GM10248 (cell line): ENCODE measurements at regions of chr14 and their contacts with region 1.

Region 1: GRCh38 chr14:64012720-64013119 is 159.9 kb downstream of the SYNE2 start:
- DNase-seq: no peak
- CTCF ChIP-seq: no peak

Region 2: DNA sequence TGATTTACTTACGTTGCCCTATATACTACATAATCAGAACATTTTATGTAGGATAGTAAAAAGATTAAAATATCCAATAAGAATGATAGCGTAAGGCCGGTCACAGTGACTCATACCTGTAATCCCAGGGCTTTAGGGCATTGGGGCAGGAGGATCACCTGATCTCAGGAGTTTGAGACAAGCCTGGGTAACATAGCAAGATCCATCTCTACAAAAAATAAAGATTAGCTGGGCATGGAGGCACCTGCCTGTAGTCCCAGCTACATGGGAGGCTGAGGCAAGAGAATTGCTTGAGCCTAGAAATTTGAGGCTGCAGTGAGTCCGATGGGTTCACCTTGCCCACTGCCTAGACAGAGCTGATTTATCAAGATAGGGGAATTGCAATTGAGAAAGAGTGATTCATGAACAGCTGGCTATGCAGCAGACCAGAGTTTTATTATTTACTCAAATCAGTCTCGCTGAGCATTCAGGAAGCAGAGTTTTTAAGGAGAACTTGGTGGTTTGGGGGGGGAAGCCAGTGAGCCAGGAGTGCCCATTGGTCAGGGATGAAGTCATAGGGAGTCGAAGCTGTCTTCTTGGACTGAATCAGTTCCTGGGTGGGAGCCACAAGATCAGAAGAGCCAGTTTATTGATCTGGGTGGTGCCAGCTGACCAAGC is 260.1 kb before region 1 on chr14:
- CTCF ChIA-PET with region 1: no interaction called
- POLR2A ChIA-PET with region 1: no interaction called
- DNase-seq: no peak
- CTCF ChIP-seq: no peak

Region 3: DNA sequence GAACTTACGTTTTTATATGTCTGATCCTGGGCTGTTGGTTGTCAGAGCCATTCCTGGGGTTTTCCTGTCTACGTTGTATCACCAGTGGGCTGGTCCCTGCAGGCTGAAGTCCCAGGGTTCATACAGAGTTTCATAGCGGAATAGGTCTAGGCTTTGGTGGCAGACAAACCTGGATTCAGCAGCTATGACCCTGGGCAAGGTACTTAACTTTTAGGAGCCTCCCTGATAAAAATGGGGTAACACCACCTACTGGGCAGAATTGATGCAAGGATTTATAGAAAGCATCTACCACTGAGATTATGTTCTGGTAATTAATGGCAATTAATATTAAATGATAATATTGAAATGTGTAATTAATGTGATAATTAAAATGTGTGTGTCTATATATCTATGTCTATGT is 18.7 kb before region 1 on chr14:
- CTCF ChIA-PET with region 1: no interaction called
- POLR2A ChIA-PET with region 1: no interaction called
- DNase-seq: no peak
- CTCF ChIP-seq: no peak

Region 4: DNA sequence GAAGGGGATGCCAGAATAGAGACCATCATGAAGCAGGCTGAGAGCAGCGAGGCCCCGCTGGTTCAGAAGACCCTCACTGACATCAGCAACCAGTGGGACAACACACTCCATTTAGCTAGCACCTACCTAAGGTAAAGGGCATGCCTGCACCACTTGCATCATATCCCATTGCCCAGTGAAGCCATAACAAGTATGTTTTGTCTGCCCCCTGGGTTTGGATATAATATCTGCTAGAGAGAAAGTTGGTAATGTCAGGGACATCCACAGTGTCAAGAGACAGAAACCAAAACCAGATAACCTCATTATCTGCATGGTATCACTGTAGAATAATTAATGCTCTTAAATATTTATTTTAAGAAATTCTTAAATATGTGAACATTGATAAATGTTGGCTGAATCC is 13.9 kb after region 1 on chr14:
- CTCF ChIA-PET with region 1: interaction called, 17 read pairs
- POLR2A ChIA-PET with region 1: no interaction called
- DNase-seq: no peak
- CTCF ChIP-seq: no peak